HAP-1 (cell line): ENCODE measurements at regions of chr13 and their contacts with region 1.

Region 1: GRCh38 chr13:23867027-23867491 is 22.1 kb downstream of the MIPEP start:
- DNase-seq: no peak
- H3K4me3 ChIP-seq: no peak overlapping the region
- H3K4me1 ChIP-seq: no peaks in the 10 kb centered on the region
- H3K27me3 ChIP-seq: no peaks in the 10 kb centered on the region

Region 2: GRCh38 chr13:22862478-22862877 is 1004.6 kb before region 1 on chr13:
- in situ Hi-C with region 1: no loop called
- DNase-seq: no peak
- H3K4me3 ChIP-seq: no peak overlapping the region
- H3K4me1 ChIP-seq: no peaks in the 10 kb centered on the region
- H3K27me3 ChIP-seq: no peaks in the 10 kb centered on the region

Region 3: DNA sequence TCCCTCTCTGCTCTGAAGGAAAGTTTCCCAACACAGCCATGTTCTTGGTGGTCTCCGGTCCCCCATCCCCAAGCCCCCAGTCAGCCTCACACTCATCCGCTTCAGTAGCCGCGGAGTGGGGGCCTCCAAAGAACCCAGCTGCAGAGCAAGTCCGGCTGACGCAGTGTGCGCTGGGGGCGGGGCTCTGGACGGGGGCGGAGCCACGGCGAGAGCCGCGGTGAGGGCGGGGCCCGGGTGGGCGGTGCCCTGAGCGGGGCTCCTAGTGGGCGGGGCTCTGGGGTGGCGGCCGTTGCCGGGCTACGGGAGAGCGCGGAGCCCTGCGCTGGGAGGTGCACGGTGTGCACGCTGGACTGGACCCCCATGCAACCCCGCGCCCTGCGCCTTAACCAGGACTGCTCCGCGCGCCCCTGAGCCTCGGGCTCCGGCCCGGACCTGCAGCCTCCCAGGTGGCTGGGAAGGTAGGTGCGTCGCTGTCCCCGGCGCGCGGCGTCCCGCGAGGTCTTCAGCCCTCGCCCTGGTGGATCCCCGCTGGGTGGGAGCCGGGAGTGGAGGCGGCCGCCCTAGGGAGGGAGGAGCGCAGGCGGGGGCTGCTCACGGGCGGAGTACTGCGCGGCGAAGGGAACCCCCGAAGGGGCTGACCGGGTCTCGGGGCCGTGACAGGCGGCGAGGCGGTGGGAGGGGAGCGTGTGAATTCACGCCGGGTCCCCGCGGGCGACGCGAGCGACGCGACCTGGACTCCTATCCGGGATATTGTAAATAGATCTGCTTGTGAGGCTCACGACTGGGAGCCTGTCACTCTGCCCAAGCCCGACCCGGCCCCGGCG is 287.8 kb before region 1 on chr13:
- in situ Hi-C with region 1: loop called (anchors 10 kb)
- DNase-seq: peak; percentile 74 to 95
- H3K4me3 ChIP-seq: peak overlapping the region; percentile 69
- H3K4me1 ChIP-seq: peaks cover 9% of the 10 kb centered on the region; the same call in 1 of the 2 replicates
- H3K27me3 ChIP-seq: no peaks in the 10 kb centered on the region

Region 4: GRCh38 chr13:23695711-23696464 is 171.2 kb before region 1 on chr13:
- in situ Hi-C with region 1: no loop called
- DNase-seq: no peak
- H3K4me3 ChIP-seq: no peak overlapping the region
- H3K4me1 ChIP-seq: peaks cover 4% of the 10 kb centered on the region
- H3K27me3 ChIP-seq: no peaks in the 10 kb centered on the region